ENCODE measurements at regions of chr4 and their contacts with region 1.

Region 1: GRCh38 chr4:108589961-108590360 is 30.4 kb upstream of the RPL34 start:
- DNase-seq: no peak
- ATAC-seq: no peak

Region 2: DNA sequence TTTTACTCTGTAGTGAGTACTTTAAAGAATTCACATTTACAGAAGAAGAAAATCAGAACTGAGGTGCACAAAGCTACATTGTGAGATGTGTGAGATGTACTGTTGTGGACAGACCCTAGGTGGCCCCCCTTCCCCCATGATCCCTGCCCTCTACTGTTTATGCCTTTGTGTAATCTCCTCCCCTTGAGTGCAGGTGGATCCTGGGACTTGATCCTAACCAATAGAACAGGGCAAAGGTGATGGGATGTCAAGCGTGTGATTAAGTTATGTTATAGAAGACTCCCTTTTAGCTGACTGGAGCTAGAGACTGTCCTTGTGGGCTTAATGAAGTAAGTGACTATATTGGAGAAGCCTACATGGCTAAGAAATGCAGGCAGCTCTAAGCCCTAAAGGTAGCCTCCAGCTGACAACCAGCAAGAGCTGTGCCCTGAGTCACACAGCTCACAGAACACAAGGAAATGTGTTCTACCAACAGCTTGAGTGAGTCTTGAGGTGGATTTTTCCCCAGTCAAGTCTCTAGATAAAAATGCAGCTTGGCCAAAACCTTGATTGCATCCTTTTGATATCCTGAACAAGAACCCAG is 196.0 kb before region 1 on chr4:
- intact Hi-C with region 1: loop called (anchors 5 kb)
- DNase-seq: no peak
- ATAC-seq: no peak